ENCODE measurements at regions of chr3 and their contacts with region 1.

Region 1: DNA sequence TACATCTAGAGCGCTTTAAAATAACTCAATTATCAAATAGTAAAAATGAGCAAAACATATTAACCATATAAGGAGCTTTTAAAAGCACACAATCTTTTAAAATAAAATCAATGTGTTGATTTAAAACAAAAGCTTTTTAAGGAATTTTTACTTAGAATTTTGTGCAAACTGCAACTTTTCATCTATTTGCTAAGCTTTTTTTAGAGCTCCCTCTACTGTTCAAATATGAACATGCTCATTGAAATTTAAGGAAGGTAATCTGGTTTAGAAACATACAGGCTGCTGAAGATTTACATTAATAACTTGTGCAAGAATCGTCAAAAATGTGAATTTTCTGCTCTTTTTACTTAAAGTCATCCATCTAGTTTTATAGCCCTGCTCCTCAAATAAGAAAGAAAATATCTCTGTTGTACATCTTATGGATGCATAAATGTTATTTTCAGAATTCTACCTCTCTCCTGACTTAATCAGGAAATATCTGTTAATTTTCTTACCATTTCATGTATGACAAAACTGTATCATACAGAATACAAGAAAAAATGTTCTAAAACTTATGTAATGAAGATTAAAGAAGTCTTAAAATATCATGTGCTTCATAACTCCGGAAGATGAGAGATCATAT is 469.4 kb upstream of the ROBO2 start:
- DNase-seq: no peak
- H3K4me3 Mint-ChIP-seq: no peak overlapping the region
- H3K27ac Mint-ChIP-seq: no peak overlapping the region
- H3K4me1 Mint-ChIP-seq: no peaks in the 10 kb centered on the region
- H3K27me3 Mint-ChIP-seq: peaks cover 53% of the 10 kb centered on the region
- CTCF ChIP-seq: peak; percentile 54

Region 2: GRCh38 chr3:75814797-75815196 is 755.8 kb before region 1 on chr3:
- CTCF ChIA-PET with region 1: interaction called, 10 read pairs
- POLR2A ChIA-PET with region 1: no interaction called
- intact Hi-C with region 1: no loop called
- DNase-seq: no peak
- H3K4me3 Mint-ChIP-seq: no peak overlapping the region
- H3K27ac Mint-ChIP-seq: no peak overlapping the region
- H3K4me1 Mint-ChIP-seq: no peaks in the 10 kb centered on the region
- H3K27me3 Mint-ChIP-seq: peaks cover 10% of the 10 kb centered on the region
- CTCF ChIP-seq: no peak

Region 3: DNA sequence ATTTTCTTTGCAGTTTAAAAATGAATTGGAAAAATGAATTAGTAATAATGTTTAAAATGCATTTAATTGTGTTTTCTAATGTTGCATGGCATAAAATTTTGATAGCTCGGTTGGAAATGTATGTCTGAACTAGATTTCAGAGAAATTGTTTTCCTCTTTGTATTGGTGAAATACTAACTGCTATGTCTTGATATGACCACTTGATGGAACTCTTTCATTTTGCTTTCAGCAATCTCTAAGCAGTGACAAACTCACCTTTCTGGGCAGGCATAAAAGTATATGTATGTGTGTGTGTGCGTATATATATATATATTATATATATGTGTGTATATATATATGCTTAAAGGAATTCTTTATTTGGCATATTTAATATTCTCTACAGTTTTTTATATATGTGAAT is 545.9 kb before region 1 on chr3:
- CTCF ChIA-PET with region 1: no interaction called
- POLR2A ChIA-PET with region 1: no interaction called
- intact Hi-C with region 1: loop called (anchors 2 kb)
- DNase-seq: no peak
- H3K4me3 Mint-ChIP-seq: no peak overlapping the region
- H3K27ac Mint-ChIP-seq: no peak overlapping the region
- H3K4me1 Mint-ChIP-seq: no peaks in the 10 kb centered on the region
- H3K27me3 Mint-ChIP-seq: peaks cover 18% of the 10 kb centered on the region
- CTCF ChIP-seq: peak; percentile 31

Region 4: GRCh38 chr3:76107935-76108570 is 462.5 kb before region 1 on chr3:
- CTCF ChIA-PET with region 1: no interaction called
- POLR2A ChIA-PET with region 1: no interaction called
- intact Hi-C with region 1: loop called (anchors 5 kb)
- DNase-seq: peak; percentile 48
- H3K4me3 Mint-ChIP-seq: no peak overlapping the region
- H3K27ac Mint-ChIP-seq: no peak overlapping the region
- H3K4me1 Mint-ChIP-seq: no peaks in the 10 kb centered on the region
- H3K27me3 Mint-ChIP-seq: peaks cover 62% of the 10 kb centered on the region
- CTCF ChIP-seq: peak; percentile 82

Region 5: GRCh38 chr3:76369178-76369577 is 201.4 kb before region 1 on chr3:
- CTCF ChIA-PET with region 1: no interaction called
- POLR2A ChIA-PET with region 1: no interaction called
- intact Hi-C with region 1: loop called (anchors 5 kb)
- DNase-seq: peak; percentile 21
- H3K4me3 Mint-ChIP-seq: no peak overlapping the region
- H3K27ac Mint-ChIP-seq: no peak overlapping the region
- H3K4me1 Mint-ChIP-seq: no peaks in the 10 kb centered on the region
- H3K27me3 Mint-ChIP-seq: peaks cover 65% of the 10 kb centered on the region
- CTCF ChIP-seq: peak; percentile 11

Region 6: DNA sequence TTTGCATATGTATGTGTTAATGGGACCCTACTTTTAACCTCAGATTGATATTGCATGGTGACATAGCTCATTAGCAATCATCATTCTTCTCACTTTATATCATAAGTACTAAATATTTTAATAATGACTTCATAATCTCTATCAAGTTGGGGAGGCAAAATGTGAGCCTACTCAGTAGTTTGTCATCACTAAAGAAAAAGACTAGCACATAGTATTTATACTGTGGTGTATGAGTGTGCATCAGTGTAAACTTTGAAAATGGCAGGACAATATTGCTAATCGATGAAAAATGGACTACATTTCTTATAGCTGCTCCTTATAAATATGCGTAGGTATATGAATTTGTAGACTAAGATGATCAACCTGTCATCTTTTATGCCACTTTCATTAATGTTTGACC is 155.2 kb before region 1 on chr3:
- CTCF ChIA-PET with region 1: no interaction called
- POLR2A ChIA-PET with region 1: no interaction called
- intact Hi-C with region 1: no loop called
- DNase-seq: no peak
- H3K4me3 Mint-ChIP-seq: no peak overlapping the region
- H3K27ac Mint-ChIP-seq: no peak overlapping the region
- H3K4me1 Mint-ChIP-seq: no peaks in the 10 kb centered on the region
- H3K27me3 Mint-ChIP-seq: peaks cover 17% of the 10 kb centered on the region
- CTCF ChIP-seq: no peak

Region 7: GRCh38 chr3:76610150-76610549 is 39.6 kb after region 1 on chr3:
- CTCF ChIA-PET with region 1: no interaction called
- POLR2A ChIA-PET with region 1: no interaction called
- intact Hi-C with region 1: no loop called
- DNase-seq: no peak
- H3K4me3 Mint-ChIP-seq: no peak overlapping the region
- H3K27ac Mint-ChIP-seq: no peak overlapping the region
- H3K4me1 Mint-ChIP-seq: no peaks in the 10 kb centered on the region
- H3K27me3 Mint-ChIP-seq: peaks cover 13% of the 10 kb centered on the region
- CTCF ChIP-seq: no peak